ENCODE measurements at regions of chr19 and their contacts with region 1.

Region 1: DNA sequence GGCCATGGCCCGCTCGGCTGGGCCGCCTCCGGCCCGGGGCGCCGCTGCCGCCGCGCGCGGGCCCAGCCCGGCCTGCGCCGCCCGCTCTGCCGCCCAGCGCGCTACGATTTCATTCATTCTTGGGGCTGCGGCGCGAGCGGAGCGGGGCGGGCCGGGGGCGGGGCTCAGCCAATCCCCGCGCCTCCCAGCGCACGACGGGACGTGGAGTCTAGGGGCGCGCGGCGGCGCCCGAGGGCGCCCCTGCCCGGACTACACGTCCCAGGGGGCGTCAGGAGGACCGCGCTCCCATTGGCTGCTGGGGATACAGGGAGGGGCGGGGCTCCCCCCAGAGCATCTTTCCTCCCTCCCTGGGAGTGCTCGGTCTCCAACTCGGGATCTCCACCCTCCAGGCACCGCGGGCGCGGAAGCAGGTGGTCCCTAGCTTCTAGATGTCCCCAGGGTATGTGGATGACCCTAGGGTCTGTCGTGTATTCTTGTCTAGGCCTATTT is 5.6 kb upstream of the DPF1 start:
- DNase-seq: peak; percentile 79
- ATAC-seq: peak; percentile 90
- H3K4me3 ChIP-seq: no peak overlapping the region
- H3K4me3 Mint-ChIP-seq: peak overlapping the region; percentile 64
- H3K27ac ChIP-seq: no peak overlapping the region
- H3K27ac Mint-ChIP-seq: peak overlapping the region; percentile 56
- H3K4me1 ChIP-seq: peaks cover 23% of the 10 kb centered on the region in 2 donors
- H3K4me1 Mint-ChIP-seq: peaks cover 22% of the 10 kb centered on the region
- H3K27me3 ChIP-seq: peaks cover 0 to 83% (median 33%) of the 10 kb centered on the region in 4 experiments
- H3K27me3 Mint-ChIP-seq: peaks cover 37% of the 10 kb centered on the region
- CTCF ChIP-seq: no peak

Region 2: DNA sequence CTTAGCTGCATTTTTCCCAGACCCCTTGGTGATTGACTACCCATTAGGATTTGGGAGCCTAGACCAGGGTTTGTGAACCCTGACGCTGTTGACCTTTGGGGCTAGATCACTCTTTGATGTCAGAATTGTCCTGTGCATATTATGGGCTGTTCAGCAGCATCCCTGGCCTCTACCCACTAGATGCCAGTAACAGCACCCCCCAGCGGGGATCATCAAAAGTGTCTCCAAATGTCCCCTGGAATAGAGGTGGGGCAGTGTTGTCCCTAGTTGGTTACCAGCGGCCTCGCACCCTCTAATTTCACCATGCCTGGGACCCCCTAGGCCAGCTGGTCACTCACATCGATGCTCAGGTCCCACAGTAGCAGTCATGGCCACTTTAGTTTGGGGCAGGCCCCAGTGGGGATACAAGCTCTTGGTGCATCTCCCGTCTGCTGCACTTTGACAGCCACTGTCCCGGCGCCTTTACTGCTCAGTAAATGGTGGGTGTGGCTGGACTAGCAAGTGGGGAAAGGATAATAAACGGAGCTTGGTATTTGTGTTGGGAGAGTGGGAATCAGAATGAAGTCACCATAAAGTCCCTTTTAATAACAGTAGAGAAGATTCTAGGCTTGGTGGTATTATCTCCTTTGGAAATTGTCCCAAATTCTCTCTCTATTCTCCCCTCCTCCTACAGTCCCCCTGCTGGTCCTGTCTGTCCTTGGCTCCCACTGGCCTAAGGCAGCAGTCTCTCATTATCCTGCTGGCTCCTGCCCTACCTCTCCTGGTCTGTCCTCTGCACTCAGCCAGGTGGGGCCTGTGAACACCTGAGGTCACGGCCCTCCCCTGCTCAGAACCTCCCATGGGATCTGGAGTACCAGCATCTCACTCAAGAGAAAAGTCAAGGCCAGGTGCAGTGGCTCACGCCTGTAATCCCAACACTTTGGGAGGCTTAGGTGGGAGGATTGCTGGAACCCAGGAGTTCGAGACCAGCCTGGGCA is 242.0 kb before region 1 on chr19:
- CTCF ChIA-PET with region 1: no interaction called
- POLR2A ChIA-PET with region 1: interaction called, 10 read pairs
- intact Hi-C with region 1: no loop called
- DNase-seq: no peak
- ATAC-seq: no peak
- H3K4me3 ChIP-seq: no peak overlapping the region
- H3K4me3 Mint-ChIP-seq: no peak overlapping the region
- H3K27ac ChIP-seq: peak overlapping the region; percentile 88 to 93
- H3K27ac Mint-ChIP-seq: peak overlapping the region; percentile 99
- H3K4me1 ChIP-seq: peaks cover 75 to 91% of the 10 kb centered on the region in 2 donors
- H3K4me1 Mint-ChIP-seq: peaks cover 85% of the 10 kb centered on the region
- H3K27me3 ChIP-seq: no peaks in the 10 kb centered on the region
- H3K27me3 Mint-ChIP-seq: no peaks in the 10 kb centered on the region
- CTCF ChIP-seq: no peak

Region 3: GRCh38 chr19:38173291-38174041 is 56.2 kb before region 1 on chr19:
- CTCF ChIA-PET with region 1: no interaction called
- POLR2A ChIA-PET with region 1: no interaction called
- intact Hi-C with region 1: no loop called
- DNase-seq: no peak
- ATAC-seq: no peak
- H3K4me3 ChIP-seq: no peak overlapping the region
- H3K4me3 Mint-ChIP-seq: no peak overlapping the region
- H3K27ac ChIP-seq: no peak overlapping the region
- H3K27ac Mint-ChIP-seq: no peak overlapping the region
- H3K4me1 ChIP-seq: no peaks in the 10 kb centered on the region
- H3K4me1 Mint-ChIP-seq: no peaks in the 10 kb centered on the region
- H3K27me3 ChIP-seq: no peaks in the 10 kb centered on the region
- H3K27me3 Mint-ChIP-seq: no peaks in the 10 kb centered on the region
- CTCF ChIP-seq: no peak

Region 4: DNA sequence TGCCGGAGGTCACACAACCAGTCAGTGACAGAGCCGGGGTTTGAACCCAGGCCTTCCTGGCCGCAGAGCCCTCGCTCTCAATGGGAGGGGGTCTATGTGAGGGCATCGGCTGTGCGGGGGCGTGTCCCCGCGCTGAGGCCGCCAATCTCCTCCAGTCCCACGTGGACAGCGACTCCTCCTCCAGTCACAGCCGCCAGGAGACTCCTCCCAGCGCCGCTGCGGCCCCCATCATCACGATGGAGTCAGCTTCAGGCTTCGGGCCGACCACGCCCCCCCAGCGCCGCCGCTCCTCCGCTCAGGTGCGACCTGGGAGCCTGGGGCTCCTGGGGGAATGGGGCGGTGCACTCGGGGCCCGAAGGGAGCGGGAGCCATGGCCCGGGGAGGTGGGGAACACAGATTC is 164.9 kb after region 1 on chr19:
- CTCF ChIA-PET with region 1: no interaction called
- POLR2A ChIA-PET with region 1: no interaction called
- intact Hi-C with region 1: no loop called
- DNase-seq: peak; percentile 70
- ATAC-seq: peak; percentile 68
- H3K4me3 ChIP-seq: peak overlapping the region in 4 of 5 experiments; percentile 12 to 57 (median 30)
- H3K4me3 Mint-ChIP-seq: peak overlapping the region; percentile 70
- H3K27ac ChIP-seq: no peak overlapping the region
- H3K27ac Mint-ChIP-seq: no peak overlapping the region
- H3K4me1 ChIP-seq: peaks cover 16 to 17% of the 10 kb centered on the region in 2 donors
- H3K4me1 Mint-ChIP-seq: peaks cover 19% of the 10 kb centered on the region
- H3K27me3 ChIP-seq: peaks cover 0 to 48% (median 23%) of the 10 kb centered on the region in 4 experiments
- H3K27me3 Mint-ChIP-seq: peaks cover 43% of the 10 kb centered on the region
- CTCF ChIP-seq: no peak